Dorsolateral prefrontal cortex (tissue), 120 donors: ENCODE measurements at regions of chr15 and their contacts with region 1.

Region 1: GRCh38 chr15:45118131-45118588 is 4.0 kb downstream of the DUOXA2 start:
- DNase-seq: peak; percentile 79 to 92 (median 88)
- H3K4me3 ChIP-seq: peak overlapping the region in 58 of 59 donors; percentile 0 to 65 (median 42)
- H3K27ac ChIP-seq: no peak overlapping the region
- H3K27me3 ChIP-seq: peaks cover 3 to 70% (median 47%) of the 10 kb centered on the region in 45 donors
- CTCF ChIP-seq: peak; percentile 62 to 100 (median 96)

Region 2: GRCh38 chr15:44519537-44519936 is 598.6 kb before region 1 on chr15:
- intact Hi-C with region 1: no loop called
- DNase-seq: no peak
- H3K4me3 ChIP-seq: no peak overlapping the region
- H3K27ac ChIP-seq: no peak overlapping the region
- H3K27me3 ChIP-seq: no peaks in the 10 kb centered on the region
- CTCF ChIP-seq: no peak

Region 3: GRCh38 chr15:44861439-44861910 is 256.7 kb before region 1 on chr15:
- intact Hi-C with region 1: loop called in 1 of 2 experiments (anchors 10 kb)
- DNase-seq: no peak
- H3K4me3 ChIP-seq: no peak overlapping the region
- H3K27ac ChIP-seq: no peak overlapping the region
- H3K27me3 ChIP-seq: peaks cover 0 to 7% (median 0%) of the 10 kb centered on the region in 45 donors
- CTCF ChIP-seq: no peak

Region 4: DNA sequence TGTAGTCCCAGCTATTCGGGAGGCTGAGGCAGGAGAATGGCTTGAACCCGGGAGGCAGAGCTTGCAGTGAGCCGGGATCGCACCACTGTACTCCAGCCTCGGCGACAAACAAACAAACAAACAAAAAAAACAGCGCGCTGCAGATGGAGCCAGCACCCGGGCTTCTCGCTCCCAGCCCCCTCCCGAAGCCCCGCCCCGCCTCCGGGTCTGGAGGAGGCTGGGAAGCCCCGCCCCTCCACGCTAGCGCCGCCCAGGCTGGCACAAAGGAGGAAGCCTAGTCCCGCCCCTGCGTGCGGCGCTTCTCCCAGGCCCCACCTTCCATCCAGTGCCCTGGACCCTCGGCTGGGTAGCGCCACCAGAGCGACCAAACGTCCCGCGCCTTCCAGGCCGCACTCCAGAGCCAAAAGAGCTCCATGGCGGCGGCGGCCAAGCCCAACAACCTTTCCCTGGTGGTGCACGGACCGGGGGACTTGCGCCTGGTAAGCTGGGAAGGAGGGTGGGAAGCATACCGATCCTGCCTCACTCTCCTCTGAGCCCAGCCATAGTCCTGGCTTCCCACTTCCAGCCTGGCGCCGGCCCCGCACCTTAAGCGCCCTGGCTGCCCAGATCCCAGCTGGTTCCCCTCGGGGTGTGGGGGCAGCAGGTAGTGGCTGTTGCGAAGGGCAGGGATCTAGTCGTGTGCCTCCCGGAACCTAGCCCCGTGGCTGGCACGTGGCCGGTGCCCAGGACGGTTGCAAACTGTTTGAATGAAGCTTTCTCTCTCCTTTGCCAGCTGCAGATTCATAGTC is 95.1 kb before region 1 on chr15 and contains the start of gene SORD:
- intact Hi-C with region 1: loop called in 1 of 2 experiments (anchors 5 kb)
- DNase-seq: peak; percentile 88 to 97 (median 94)
- H3K4me3 ChIP-seq: peak within 1 kb of the TSS; percentile 60 to 95 (median 83)
- H3K27ac ChIP-seq: peak within 1 kb of the TSS; percentile 10 to 96 (median 88)
- H3K27me3 ChIP-seq: no peaks in the 10 kb centered on the region
- CTCF ChIP-seq: peak in 27 of 56 donors; percentile 3 to 57 (median 23)
- total RNA-seq, gene SORD: 7.3 to 24.3 (median 15.2) TPM

Region 5: DNA sequence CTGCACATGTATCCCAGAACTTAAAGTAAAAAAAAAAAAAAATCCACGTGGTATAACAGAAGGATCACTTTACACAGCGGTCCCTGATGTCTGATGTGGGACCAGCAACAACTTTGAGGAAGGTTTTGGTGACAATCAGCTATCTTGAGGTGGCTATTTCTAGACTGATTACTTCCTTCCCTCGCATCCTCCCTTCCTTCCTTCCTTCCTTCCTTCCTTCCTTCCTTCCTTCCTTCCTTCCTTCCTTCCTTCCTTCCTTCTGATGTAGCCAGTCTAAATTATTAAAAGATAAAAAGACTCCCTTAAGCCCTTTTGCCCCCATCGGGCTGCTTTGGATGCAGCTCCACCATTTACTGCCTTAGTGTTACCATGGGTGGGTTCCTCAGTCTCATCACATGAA is 80.2 kb before region 1 on chr15:
- intact Hi-C with region 1: loop called in 1 of 2 experiments (anchors 5 kb)
- DNase-seq: no peak
- H3K4me3 ChIP-seq: no peak overlapping the region
- H3K27ac ChIP-seq: no peak overlapping the region
- H3K27me3 ChIP-seq: no peaks in the 10 kb centered on the region
- CTCF ChIP-seq: no peak

Region 6: DNA sequence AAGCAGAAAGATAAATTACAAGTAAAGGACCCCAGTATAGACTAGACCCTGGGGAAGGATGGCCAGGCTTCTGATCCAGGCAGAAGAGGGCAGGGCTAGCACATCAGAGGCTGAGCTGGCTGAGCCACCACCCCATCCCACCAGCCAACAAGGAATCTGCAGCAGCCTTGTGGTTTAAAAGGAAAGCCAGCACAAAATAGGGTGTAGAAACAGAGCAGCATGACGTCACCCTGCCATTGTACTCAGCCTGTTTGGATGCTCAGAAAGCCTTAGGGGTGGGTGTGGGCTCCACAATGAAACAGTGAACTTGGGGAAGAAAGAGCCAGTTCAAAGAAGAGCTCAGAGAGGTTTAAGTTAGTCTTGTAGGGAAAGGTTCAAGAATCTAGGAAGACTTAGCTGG is 39.8 kb after region 1 on chr15:
- intact Hi-C with region 1: loop called in 1 of 2 experiments (anchors 5 kb)
- DNase-seq: peak in 9 of 10 donors; percentile 31 to 88 (median 70)
- H3K4me3 ChIP-seq: peak overlapping the region in 2 of 59 donors; percentile 11 to 18
- H3K27ac ChIP-seq: peak overlapping the region in 58 of 59 donors; percentile 22 to 92 (median 80)
- H3K27me3 ChIP-seq: no peaks in the 10 kb centered on the region
- CTCF ChIP-seq: peak in 14 of 56 donors; percentile 5 to 36 (median 22)